ENCODE measurements at regions of chr15 and their contacts with region 1.

Region 1: DNA sequence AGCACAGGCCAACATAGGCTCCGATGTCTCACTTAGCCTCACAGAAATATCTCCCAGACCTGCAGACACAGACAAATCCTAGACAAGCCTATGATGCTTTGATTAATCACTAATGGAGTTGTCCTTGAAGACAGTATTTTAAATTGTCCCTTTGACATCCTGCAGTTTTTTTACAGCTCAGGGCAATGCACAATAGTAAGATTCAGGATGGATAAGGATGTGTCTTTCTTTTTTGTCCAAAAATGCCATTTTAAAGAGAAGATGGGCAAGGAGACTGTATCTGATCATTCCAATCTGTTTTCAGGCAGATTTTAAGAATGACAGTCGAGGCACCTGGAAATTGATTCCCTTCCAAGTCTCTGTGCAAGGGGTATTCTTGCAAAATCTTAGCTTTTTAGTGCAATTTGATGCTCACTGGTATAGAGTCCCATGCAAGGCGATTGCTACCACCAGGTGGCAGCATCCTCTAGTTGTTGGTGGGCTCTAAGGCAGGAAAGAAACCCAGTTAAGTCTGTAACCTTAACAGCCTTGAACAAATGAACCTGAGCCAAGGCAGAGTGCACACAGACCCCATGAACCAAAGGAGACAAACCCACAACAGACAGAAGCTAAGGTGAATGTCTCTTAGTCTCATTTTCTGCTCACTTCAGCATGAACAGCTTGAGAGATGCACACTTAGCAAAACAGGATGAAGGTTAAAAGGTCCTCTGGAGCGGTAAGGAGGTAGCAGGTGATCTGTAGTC is 51.2 kb upstream of the MINAR1 start:
- DNase-seq: peak; percentile 87
- H3K4me3 Mint-ChIP-seq: no peak overlapping the region
- H3K27ac Mint-ChIP-seq: no peak overlapping the region
- H3K4me1 Mint-ChIP-seq: no peaks in the 10 kb centered on the region
- H3K27me3 Mint-ChIP-seq: no peaks in the 10 kb centered on the region
- CTCF ChIP-seq: peak; percentile 82

Region 2: GRCh38 chr15:79427781-79428598 is 47.1 kb after region 1 on chr15:
- CTCF ChIA-PET with region 1: interaction called, 13 read pairs
- intact Hi-C with region 1: no loop called
- DNase-seq: no peak
- H3K4me3 Mint-ChIP-seq: no peak overlapping the region
- H3K27ac Mint-ChIP-seq: no peak overlapping the region
- H3K4me1 Mint-ChIP-seq: no peaks in the 10 kb centered on the region
- H3K27me3 Mint-ChIP-seq: peaks cover 57% of the 10 kb centered on the region
- CTCF ChIP-seq: no peak

Region 3: DNA sequence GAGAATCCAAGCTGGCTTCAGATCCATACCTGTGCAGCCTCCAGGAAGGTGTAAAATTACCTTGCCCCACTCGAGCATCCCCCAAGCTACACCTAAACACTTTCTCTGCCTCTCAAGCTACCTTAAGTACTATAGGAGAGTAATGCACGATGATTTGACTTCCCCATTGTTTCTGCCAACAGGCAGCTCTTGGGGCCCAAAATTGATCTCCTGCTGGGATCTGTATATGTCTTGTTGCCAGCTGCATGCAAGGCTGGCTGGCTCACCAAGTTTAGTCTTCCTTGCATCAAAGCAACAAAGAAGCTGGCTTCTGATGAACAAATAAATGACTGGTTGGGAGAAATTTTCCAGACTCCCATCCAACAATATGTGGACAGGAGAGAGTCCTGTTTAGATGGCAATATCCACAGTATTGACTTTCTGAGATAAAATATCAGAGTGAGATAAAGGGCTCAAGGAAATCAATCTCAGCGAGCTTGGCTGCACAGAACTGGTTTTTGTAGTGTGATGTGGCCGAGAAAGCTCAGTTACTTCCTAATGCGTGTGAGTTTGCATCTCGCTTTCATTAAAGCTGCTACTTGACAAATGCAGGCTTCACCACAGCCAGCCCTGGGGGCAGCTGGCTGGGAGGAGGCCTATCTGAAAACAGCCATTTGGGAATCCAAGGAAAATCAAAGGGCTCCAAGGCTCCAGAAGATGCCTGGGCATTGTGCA is 191.9 kb after region 1 on chr15:
- CTCF ChIA-PET with region 1: interaction called, 7 read pairs
- intact Hi-C with region 1: loop called (anchors 5 kb)
- DNase-seq: no peak
- H3K4me3 Mint-ChIP-seq: no peak overlapping the region
- H3K27ac Mint-ChIP-seq: no peak overlapping the region
- H3K4me1 Mint-ChIP-seq: no peaks in the 10 kb centered on the region
- H3K27me3 Mint-ChIP-seq: no peaks in the 10 kb centered on the region
- CTCF ChIP-seq: no peak

Region 4: GRCh38 chr15:79596051-79596507 is 215.2 kb after region 1 on chr15:
- CTCF ChIA-PET with region 1: interaction called, 42 read pairs
- intact Hi-C with region 1: loop called (anchors 1 kb)
- DNase-seq: peak; percentile 79
- H3K4me3 Mint-ChIP-seq: no peak overlapping the region
- H3K27ac Mint-ChIP-seq: no peak overlapping the region
- H3K4me1 Mint-ChIP-seq: no peaks in the 10 kb centered on the region
- H3K27me3 Mint-ChIP-seq: peaks cover 68% of the 10 kb centered on the region
- CTCF ChIP-seq: peak; percentile 90

Region 5: GRCh38 chr15:79853458-79854328 is 472.8 kb after region 1 on chr15:
- CTCF ChIA-PET with region 1: interaction called, 22 read pairs
- intact Hi-C with region 1: loop called (anchors 1 kb)
- DNase-seq: peak; percentile 81
- H3K4me3 Mint-ChIP-seq: no peak overlapping the region
- H3K27ac Mint-ChIP-seq: no peak overlapping the region
- H3K4me1 Mint-ChIP-seq: peaks cover 11% of the 10 kb centered on the region
- H3K27me3 Mint-ChIP-seq: no peaks in the 10 kb centered on the region
- CTCF ChIP-seq: peak; percentile 89

Region 6: DNA sequence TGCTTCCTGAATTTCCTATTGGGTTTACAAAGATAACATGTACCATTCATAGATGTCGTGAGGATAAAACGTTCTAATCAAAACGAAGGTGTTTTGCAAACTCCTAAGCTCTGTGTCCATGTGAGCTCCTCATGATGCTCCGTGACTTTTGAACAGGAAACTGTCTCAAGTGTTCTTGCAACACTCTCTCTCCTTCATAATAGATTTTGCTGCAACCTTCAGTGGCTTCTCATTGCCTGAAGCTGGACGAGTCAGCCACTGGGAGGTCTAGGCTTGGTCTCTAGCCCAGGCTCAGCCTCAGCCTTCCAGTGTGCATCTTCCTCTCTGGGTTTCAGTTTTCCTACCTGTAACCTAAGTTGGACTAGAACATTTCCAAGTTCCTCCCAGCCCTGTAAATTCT is 608.8 kb after region 1 on chr15:
- CTCF ChIA-PET with region 1: no interaction called
- intact Hi-C with region 1: loop called (anchors 2 kb)
- DNase-seq: no peak
- H3K4me3 Mint-ChIP-seq: no peak overlapping the region
- H3K27ac Mint-ChIP-seq: no peak overlapping the region
- H3K4me1 Mint-ChIP-seq: peaks cover 15% of the 10 kb centered on the region
- H3K27me3 Mint-ChIP-seq: peaks cover 15% of the 10 kb centered on the region
- CTCF ChIP-seq: no peak

Region 7: GRCh38 chr15:80173022-80173759 is 792.3 kb after region 1 on chr15:
- CTCF ChIA-PET with region 1: interaction called, 3 read pairs
- intact Hi-C with region 1: loop called (anchors 2 kb)
- DNase-seq: peak; percentile 87
- H3K4me3 Mint-ChIP-seq: no peak overlapping the region
- H3K27ac Mint-ChIP-seq: no peak overlapping the region
- H3K4me1 Mint-ChIP-seq: no peaks in the 10 kb centered on the region
- H3K27me3 Mint-ChIP-seq: no peaks in the 10 kb centered on the region
- CTCF ChIP-seq: peak; percentile 92